ENCODE measurements at regions of chr6 and their contacts with region 1.

Region 1: DNA sequence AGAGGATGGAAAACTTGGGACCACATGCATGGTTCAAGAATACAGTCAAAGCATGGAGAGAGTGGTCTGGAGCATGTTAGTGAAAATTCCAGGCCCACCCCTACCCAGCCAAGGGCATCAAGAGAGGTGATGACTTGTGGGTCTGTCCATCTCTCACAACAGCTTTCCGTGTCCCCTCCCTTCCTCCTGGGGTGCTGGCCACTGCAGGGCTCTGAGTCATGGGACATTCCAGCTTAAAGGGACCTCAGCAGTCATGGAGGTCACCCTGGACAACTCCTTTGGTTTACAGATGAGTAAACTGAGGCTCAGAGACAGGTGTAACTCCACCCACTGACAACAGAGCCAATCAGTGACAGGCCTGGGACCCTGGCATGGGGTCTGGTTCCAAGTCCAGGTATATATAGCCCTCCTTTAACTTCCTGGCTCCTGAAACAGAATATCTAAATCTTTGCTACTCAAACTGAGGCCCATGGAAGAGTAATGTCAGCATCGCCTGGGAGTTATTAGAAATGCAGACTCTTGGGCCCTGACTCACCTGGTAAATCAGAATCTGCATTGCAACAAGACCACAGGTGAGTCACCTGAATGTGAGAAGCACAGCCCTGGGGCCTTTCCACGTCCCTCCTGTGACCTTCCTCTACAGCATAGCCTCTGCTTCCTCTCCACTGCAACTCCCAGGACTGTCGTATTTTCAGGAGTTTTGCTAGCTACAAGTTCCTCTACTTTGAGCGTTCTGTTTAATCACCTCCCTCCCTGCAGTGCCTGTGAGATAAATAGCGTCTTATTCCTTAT is 170.2 kb downstream of the ZDHHC14 start:
- DNase-seq: no peak
- H3K4me3 Mint-ChIP-seq: no peak overlapping the region
- H3K27ac Mint-ChIP-seq: peak overlapping the region; percentile 80
- H3K4me1 Mint-ChIP-seq: peaks cover 36% of the 10 kb centered on the region
- H3K27me3 Mint-ChIP-seq: peaks cover 2% of the 10 kb centered on the region

Region 2: DNA sequence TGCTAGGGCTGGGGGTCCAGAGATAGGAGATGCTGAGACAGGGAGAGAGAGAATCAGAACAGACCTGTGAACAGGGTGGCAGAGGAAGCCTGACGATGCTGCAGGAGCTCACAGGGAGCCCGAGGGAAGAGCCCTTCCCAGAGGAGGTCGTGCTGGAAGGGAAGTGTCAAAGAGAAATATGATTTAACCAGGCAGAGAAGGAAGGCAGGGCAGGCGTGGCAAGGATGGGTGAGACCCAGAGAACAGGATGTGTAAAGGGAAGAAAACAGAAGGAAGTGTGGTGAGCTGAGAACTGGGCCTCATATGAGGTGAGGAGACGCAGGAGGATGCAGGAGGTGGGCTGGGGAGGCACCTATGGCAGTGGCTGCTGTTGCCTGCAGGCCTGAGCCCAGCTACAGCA is 64.7 kb before region 1 on chr6:
- CTCF ChIA-PET with region 1: no interaction called
- POLR2A ChIA-PET with region 1: no interaction called
- DNase-seq: peak; percentile 56
- H3K4me3 Mint-ChIP-seq: peak overlapping the region; percentile 40
- H3K27ac Mint-ChIP-seq: peak overlapping the region; percentile 87
- H3K4me1 Mint-ChIP-seq: peaks cover 51% of the 10 kb centered on the region
- H3K27me3 Mint-ChIP-seq: peaks cover 4% of the 10 kb centered on the region

Region 3: DNA sequence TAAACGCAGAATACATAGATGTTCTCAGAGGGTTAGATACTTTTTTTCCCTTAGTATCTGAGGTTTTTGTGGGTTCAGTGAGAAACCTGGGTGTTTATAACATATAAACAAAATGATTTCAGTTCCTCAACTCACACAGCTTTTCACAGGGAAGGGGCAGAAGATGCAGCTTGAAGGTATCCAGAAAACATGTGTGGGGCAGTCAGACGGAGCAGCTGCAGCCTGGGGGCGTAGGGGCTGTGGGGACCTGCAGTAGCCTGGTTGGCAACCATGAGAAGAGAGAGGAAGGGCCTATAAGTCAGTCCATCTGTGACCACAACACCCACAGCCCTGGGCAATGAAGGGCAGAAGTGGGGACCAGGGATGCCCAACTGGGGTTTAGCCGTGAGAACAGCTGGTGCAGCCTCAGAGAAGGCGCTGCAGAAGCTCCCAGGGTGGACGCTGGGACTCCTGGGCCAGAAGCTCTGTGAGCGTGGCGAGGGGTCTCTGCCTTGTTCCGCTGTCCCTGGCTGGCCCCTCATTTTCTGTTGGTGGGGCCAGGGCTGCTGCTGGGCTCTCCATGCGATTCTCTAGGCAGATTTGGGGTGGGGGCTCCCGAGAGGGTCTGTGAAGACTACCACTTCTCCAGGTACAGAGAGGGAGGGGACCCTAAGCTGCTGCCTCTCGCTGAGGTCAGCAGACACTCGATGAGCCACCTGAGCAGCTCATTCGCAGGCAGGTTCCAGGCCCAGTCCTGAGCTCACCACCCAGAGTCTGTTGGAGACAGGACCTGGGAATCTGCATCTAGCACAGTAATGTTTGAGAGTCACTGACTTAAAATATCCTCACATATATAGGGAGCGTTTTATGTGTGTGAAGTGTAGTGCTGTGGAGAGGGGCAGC is 10.9 kb after region 1 on chr6:
- CTCF ChIA-PET with region 1: interaction called, 10 read pairs
- POLR2A ChIA-PET with region 1: no interaction called
- DNase-seq: no peak
- H3K4me3 Mint-ChIP-seq: peak overlapping the region; percentile 19
- H3K27ac Mint-ChIP-seq: peak overlapping the region; percentile 87
- H3K4me1 Mint-ChIP-seq: peaks cover 56% of the 10 kb centered on the region
- H3K27me3 Mint-ChIP-seq: peaks cover 1% of the 10 kb centered on the region

Measured in activated CD4-positive, alpha-beta T cell treated with anti-CD3 and anti-CD28 coated beads, Interleukin-2, amount 10 ng/mL, durations not matched to agents 7 days and 5 days (primary cell).